ENCODE measurements at regions of chr14 and their contacts with region 1.

Region 1: GRCh38 chr14:102862149-102862773 is 60.2 kb upstream of the AMN start:
- DNase-seq: no peak
- H3K4me3 ChIP-seq: no peak overlapping the region
- H3K27ac ChIP-seq: no peak overlapping the region
- H3K4me1 ChIP-seq: no peaks in the 10 kb centered on the region
- H3K27me3 ChIP-seq: no peaks in the 10 kb centered on the region
- CTCF ChIP-seq: no peak

Region 2: DNA sequence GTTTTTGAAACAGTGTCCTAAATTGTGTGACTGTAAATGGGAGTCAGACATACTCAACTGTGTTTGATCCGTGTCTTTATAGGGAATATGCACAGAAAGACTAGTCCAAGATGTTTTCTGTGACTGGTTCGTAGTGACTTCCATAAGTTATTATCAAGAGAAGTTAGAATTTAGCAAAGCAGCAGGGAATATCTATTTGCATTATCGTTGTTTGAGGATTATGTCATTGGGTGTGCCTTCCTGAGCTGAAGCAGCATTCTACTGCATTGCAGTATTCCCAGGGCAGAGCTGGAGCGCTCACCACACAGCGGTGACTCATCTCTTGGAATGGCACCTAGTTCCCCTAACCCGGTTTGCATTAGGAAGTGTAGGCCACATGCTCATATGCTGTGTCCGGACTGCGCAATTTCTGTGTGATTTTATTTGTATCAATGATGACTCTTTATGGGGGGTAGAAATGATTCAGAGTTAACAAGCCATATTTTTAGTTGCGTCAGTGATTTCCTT is 889.9 kb before region 1 on chr14:
- CTCF ChIA-PET with region 1: no interaction called
- POLR2A ChIA-PET with region 1: interaction called, 14 read pairs
- intact Hi-C with region 1: no loop called
- DNase-seq: peak; percentile 96 to 100
- H3K4me3 ChIP-seq: peak overlapping the region; percentile 47; the same call in 1 of the 2 replicates
- H3K27ac ChIP-seq: peak overlapping the region; percentile 96
- H3K4me1 ChIP-seq: peaks cover 72% of the 10 kb centered on the region
- H3K27me3 ChIP-seq: no peaks in the 10 kb centered on the region
- CTCF ChIP-seq: no peak

Region 3: DNA sequence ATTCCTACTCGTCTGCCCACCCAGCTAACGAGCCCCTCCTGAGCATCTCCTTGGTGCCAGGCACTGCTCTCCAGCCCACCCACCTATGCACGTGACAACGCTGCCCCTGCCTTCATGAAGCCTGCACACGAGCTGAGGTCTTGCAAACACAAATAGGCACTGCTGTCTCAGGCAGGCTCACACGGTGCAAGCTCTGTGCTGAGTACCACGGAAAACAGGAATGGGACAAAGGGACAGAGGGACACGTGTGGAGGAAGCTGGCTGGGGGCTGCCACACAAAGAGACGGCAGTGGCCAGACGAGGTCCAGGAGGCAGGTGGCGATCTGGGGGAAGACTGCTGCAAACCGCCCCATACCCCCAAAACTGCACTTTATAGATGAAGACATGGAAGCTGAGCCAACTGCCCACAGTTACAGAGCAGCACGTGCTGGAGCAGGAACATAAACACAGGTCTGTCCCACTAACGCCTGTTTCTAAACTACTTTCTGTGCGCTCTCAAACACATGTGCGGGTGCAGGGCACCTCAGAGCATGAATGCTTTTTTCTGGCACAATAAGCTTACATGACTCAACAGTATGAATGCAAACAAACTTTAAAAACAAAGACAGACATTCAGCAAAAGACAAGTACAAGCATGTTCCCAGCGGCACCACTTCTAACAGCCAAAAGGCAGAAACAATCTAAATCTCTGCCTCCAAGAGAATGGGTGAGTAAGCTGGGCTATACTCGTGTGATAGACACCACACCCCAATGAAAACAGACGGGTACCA is 124.7 kb after region 1 on chr14:
- CTCF ChIA-PET with region 1: no interaction called
- POLR2A ChIA-PET with region 1: no interaction called
- intact Hi-C with region 1: no loop called
- DNase-seq: no peak
- H3K4me3 ChIP-seq: no peak overlapping the region
- H3K27ac ChIP-seq: no peak overlapping the region
- H3K4me1 ChIP-seq: no peaks in the 10 kb centered on the region
- H3K27me3 ChIP-seq: no peaks in the 10 kb centered on the region
- CTCF ChIP-seq: no peak